Activated CD8-positive, alpha-beta T cell treated with anti-CD3 and anti-CD28 coated beads for 36 hours (primary cell): ENCODE measurements at regions of chr11 and their contacts with region 1.

Region 1: DNA sequence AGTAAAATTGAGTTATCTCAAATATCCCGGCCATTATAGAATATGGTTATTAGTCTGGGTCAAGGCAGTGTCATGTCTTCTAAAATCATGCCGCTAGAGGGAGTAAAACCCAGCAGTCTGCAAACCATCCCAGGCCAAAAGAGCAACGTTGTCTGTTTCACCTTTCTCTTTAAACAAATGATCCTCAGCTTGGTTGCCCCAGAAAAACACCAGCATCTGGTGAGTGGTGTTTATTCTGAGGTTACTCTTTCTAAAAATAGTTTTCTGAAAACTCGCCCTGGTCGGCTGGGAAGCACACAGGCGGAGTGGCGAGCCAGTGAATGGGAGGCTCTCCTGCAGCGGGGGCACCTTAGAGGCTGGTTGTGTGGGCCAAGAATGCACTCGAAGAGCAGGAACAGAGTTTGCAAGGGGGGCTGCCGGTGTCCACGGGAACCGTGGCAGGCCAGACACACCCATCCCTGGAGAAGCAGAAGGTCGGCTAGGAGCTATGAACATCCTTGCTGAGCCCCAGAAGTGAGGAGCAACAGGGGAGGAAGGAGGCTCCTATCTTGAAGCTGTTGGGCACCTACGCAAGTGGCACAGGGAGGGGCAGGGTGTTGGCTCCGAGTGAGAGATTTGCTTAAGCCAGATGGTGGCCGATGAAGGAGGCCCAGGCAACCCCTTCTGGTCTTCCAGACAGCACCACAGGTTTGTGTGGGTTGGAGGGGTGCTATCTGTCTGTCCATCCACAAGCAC is 297.1 kb downstream of the ETS1 start:
- DNase-seq: peak; percentile 87
- ATAC-seq: peak; percentile 62
- H3K4me3 Mint-ChIP-seq: peak overlapping the region; percentile 83
- H3K27ac Mint-ChIP-seq: peak overlapping the region; percentile 95
- H3K4me1 Mint-ChIP-seq: peaks cover 94% of the 10 kb centered on the region
- H3K27me3 Mint-ChIP-seq: no peaks in the 10 kb centered on the region
- CTCF ChIP-seq: peak; percentile 88

Region 2: GRCh38 chr11:128172046-128172878 is 118.0 kb before region 1 on chr11:
- CTCF ChIA-PET with region 1: interaction called, 19 read pairs
- POLR2A ChIA-PET with region 1: interaction called, 3 read pairs
- intact Hi-C with region 1: loop called (anchors 5 kb)
- DNase-seq: peak; percentile 96
- ATAC-seq: peak; percentile 81
- H3K4me3 Mint-ChIP-seq: no peak overlapping the region
- H3K27ac Mint-ChIP-seq: no peak overlapping the region
- H3K4me1 Mint-ChIP-seq: peaks cover 16% of the 10 kb centered on the region
- H3K27me3 Mint-ChIP-seq: no peaks in the 10 kb centered on the region
- CTCF ChIP-seq: peak; percentile 69

Region 3: GRCh38 chr11:128302425-128303186 is 12.3 kb after region 1 on chr11:
- CTCF ChIA-PET with region 1: interaction called, 8 read pairs
- POLR2A ChIA-PET with region 1: interaction called, 30 read pairs
- intact Hi-C with region 1: no loop called
- DNase-seq: peak; percentile 80
- ATAC-seq: peak; percentile 90
- H3K4me3 Mint-ChIP-seq: peak overlapping the region; percentile 85
- H3K27ac Mint-ChIP-seq: peak overlapping the region; percentile 90
- H3K4me1 Mint-ChIP-seq: peaks cover 79% of the 10 kb centered on the region
- H3K27me3 Mint-ChIP-seq: no peaks in the 10 kb centered on the region
- CTCF ChIP-seq: peak; percentile 14

Region 4: GRCh38 chr11:128342511-128343134 is 52.4 kb after region 1 on chr11:
- CTCF ChIA-PET with region 1: interaction called, 4 read pairs
- POLR2A ChIA-PET with region 1: interaction called, 7 read pairs
- intact Hi-C with region 1: loop called (anchors 10 kb)
- DNase-seq: peak; percentile 89
- ATAC-seq: peak; percentile 81
- H3K4me3 Mint-ChIP-seq: peak overlapping the region; percentile 69
- H3K27ac Mint-ChIP-seq: peak overlapping the region; percentile 86
- H3K4me1 Mint-ChIP-seq: peaks cover 84% of the 10 kb centered on the region
- H3K27me3 Mint-ChIP-seq: no peaks in the 10 kb centered on the region
- CTCF ChIP-seq: no peak

Region 5: DNA sequence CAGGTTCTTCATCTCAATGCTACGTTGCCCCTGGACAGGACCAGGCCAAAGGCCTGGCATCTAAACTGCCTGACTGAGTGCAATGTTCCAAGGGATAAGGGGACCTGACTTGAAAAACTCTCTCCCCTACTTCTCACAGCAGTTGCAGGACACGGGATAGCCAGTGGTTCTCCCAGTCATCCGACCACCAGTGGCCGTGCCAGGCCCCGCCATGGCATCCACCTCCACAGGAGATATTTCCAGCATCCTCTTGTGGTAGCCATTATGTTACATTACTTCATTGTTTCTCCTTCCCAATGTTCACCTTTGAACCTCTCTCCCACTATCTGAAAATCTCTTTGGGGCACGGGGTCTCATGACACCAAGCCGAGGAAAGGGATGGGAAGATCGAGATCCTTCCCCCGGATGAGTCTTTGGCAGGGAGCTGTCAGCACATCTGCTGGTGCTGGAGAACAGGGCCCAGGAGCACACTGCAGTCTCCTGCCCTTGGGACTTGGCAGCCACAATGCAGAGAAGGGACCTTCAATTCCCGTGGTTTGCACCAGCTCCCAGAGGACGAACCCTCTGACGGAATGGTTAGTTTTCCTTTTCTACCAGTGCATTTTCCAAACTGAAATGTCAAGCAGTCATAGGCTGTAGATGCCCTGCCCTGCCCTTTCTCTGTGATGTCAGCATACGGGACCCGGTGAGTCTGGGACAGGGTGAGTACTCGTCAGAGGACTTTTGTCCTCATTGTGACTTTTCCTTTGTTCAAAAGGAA is 175.9 kb after region 1 on chr11:
- CTCF ChIA-PET with region 1: interaction called, 19 read pairs
- POLR2A ChIA-PET with region 1: interaction called, 32 read pairs
- intact Hi-C with region 1: loop called (anchors 5 kb)
- DNase-seq: no peak
- ATAC-seq: no peak
- H3K4me3 Mint-ChIP-seq: peak overlapping the region; percentile 68
- H3K27ac Mint-ChIP-seq: peak overlapping the region; percentile 97
- H3K4me1 Mint-ChIP-seq: peaks cover 93% of the 10 kb centered on the region
- H3K27me3 Mint-ChIP-seq: no peaks in the 10 kb centered on the region
- CTCF ChIP-seq: no peak

Region 6: GRCh38 chr11:128497061-128497775 is 206.9 kb after region 1 on chr11:
- CTCF ChIA-PET with region 1: interaction called, 17 read pairs
- POLR2A ChIA-PET with region 1: interaction called, 5 read pairs
- intact Hi-C with region 1: loop called (anchors 10 kb)
- DNase-seq: peak; percentile 49
- ATAC-seq: no peak
- H3K4me3 Mint-ChIP-seq: peak overlapping the region; percentile 88
- H3K27ac Mint-ChIP-seq: peak overlapping the region; percentile 98
- H3K4me1 Mint-ChIP-seq: peaks cover 94% of the 10 kb centered on the region
- H3K27me3 Mint-ChIP-seq: no peaks in the 10 kb centered on the region
- CTCF ChIP-seq: no peak